ENCODE measurements at regions of chr1 and their contacts with region 1.

Region 1: DNA sequence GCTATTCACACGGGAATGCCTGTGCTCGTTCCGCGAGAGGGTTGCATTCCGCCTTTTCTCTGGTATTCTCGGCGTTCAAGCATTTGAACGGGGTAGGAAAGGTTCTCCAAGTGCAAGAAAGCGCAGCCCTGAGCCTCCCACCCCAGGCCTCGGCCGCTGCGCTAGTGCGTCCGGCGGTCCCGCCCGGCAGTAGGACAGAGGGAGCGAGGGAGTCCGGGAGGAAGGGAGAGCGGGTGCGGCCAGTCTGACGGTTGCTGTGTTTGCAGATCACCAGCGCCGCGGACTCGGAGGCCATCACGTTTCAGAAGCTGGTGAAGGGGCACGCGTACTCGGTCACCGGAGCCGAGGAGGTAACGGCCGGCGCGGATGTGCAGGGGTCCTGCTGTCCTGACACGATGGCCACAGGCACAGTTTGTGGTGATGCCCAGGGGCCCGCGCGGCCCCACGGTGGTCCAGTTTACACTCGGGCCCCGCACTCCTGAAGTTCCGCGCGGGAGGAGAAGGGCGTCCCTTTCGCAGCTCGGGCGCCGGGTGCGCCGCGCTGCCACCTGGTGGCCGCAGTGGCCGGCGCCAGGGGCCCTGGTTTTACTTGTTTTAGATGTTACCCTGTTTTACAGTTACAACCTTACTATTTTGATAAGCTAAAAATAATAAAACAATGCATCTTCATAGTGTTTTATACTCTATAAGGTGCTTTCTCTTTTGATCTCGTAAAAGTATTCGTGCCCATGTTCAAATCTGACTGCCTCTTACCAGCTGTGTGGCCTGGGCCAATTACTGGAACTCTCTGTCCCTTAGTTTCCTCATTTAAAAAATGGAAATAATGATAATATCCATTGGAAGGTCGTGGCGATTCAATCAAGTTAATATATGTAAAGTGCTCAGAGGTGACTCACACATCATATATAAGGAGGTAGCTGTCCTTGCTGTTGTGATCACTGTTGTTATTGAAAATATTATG is 36.7 kb downstream of the CAPN2 start:
- DNase-seq: peak; percentile 67 to 80
- ATAC-seq: peak; percentile 80 to 95 (median 83)
- H3K4me3 ChIP-seq: peak overlapping the region; percentile 55
- H3K27ac ChIP-seq: peak overlapping the region; percentile 33
- H3K4me1 ChIP-seq: peaks cover 13% of the 10 kb centered on the region
- H3K27me3 ChIP-seq: no peaks in the 10 kb centered on the region
- CTCF ChIP-seq: peak; percentile 96

Region 2: GRCh38 chr1:223700942-223701637 is 48.0 kb before region 1 on chr1:
- intact Hi-C with region 1: loop called in 1 of 2 experiments (anchors 2 kb)
- DNase-seq: peak in 1 of 2 donors; percentile 46
- ATAC-seq: peak in 3 of 4 donors; percentile 44 to 51 (median 48)
- H3K4me3 ChIP-seq: no peak overlapping the region
- H3K27ac ChIP-seq: peak overlapping the region; percentile 13
- H3K4me1 ChIP-seq: peaks cover 7% of the 10 kb centered on the region
- H3K27me3 ChIP-seq: no peaks in the 10 kb centered on the region
- CTCF ChIP-seq: no peak

Region 3: GRCh38 chr1:223712194-223712849 is 36.7 kb before region 1 on chr1 and contains the start of gene CAPN2:
- intact Hi-C with region 1: loop called (anchors 1 to 2 kb)
- DNase-seq: peak; percentile 91 to 94
- ATAC-seq: peak; percentile 93 to 94 (median 94)
- H3K4me3 ChIP-seq: peak within 1 kb of the TSS; percentile 89
- H3K27ac ChIP-seq: peak within 1 kb of the TSS; percentile 96
- H3K4me1 ChIP-seq: peaks cover 48% of the 10 kb centered on the region
- H3K27me3 ChIP-seq: no peaks in the 10 kb centered on the region
- CTCF ChIP-seq: peak; percentile 81
- total RNA-seq, gene CAPN2: 77.1 to 151 (median 105) TPM

Region 4: GRCh38 chr1:223732992-223733798 is 15.9 kb before region 1 on chr1:
- intact Hi-C with region 1: loop called in 1 of 2 experiments (anchors 2 kb)
- DNase-seq: no peak
- ATAC-seq: no peak
- H3K4me3 ChIP-seq: no peak overlapping the region
- H3K27ac ChIP-seq: peak overlapping the region; percentile 46
- H3K4me1 ChIP-seq: peaks cover 48% of the 10 kb centered on the region
- H3K27me3 ChIP-seq: no peaks in the 10 kb centered on the region
- CTCF ChIP-seq: no peak